ENCODE measurements at regions of chrX and their contacts with region 1.

Region 1: DNA sequence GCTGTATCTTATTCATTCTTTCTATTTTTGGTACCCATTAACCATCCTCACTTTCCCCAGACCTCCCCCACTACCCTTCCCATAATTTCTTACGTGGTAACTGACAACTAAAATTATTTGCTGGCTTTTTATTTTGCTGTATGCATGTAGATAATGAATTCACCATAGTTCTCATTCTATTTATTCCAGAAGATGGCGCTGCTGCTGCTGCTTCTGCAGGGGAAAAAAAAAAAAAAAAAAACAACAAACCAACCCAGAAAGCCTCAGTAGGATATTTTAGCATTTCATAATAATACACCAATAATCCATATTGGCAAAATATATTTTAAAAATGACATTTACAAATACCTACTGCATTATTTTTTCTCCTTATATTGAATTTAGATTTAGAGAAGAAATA is 416.6 kb upstream of the MAGEB18 start:
- DNase-seq: peak; percentile 1
- ATAC-seq: no peak
- H3K4me3 ChIP-seq: no peak overlapping the region
- H3K27ac ChIP-seq: no peak overlapping the region
- H3K4me1 ChIP-seq: no peaks in the 10 kb centered on the region
- H3K27me3 ChIP-seq: no peaks in the 10 kb centered on the region
- CTCF ChIP-seq: no peak
- EP300 ChIP-seq: no peak
- POLR2A ChIP-seq: no peak
- RAD21 ChIP-seq: no peak

Region 2: DNA sequence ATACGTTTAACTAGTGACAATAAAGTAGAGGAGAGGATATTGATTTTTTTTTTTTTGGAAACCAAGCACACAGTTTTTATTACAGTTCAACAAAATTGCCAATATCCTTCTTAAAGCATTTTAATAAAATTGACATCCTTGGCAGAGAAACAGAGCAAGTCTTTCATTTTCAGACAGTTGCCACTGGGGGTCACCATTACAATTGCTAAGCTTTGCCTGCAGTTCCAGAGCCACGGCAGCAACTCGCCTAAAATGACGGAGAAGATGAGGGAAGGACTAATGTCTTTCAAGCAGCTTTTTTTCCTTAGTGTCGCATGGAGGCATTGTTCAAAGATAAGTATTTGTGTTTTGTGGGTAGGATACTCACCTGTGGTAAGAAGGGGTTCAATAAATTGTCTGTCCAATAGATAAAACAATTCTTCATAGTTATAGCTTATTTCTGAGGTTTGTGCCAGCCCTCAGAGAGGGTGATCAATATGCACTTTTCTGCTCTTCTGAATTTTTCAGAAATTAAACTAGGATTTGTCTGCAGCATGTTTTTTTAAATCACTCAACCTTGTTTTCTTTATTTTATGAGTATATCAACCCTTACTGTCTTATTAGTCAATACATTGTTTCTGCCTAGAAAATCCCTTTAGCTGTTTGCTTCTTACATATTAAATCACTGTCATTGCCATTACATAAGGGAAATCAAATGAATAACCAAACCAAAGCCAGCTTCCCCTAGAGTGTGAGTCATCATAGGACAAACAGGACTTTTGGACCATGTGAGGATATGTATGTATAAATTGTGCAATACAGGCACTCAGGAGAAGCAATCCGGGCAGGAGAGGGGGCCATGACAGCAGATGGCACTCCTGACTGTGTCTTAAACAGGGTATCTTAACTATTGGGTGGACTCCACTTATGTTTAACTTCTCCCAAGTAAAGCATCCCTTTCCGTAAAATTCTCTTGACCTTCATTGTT is 197.7 kb before region 1 on chrX:
- CTCF ChIA-PET with region 1: no interaction called
- POLR2A ChIA-PET with region 1: no interaction called
- in situ Hi-C with region 1: no loop called
- intact Hi-C with region 1: loop called (anchors 5 kb)
- DNase-seq: peak; percentile 82
- ATAC-seq: peak; percentile 97
- H3K4me3 ChIP-seq: no peak overlapping the region
- H3K27ac ChIP-seq: no peak overlapping the region
- H3K4me1 ChIP-seq: peaks cover 21% of the 10 kb centered on the region
- H3K27me3 ChIP-seq: no peaks in the 10 kb centered on the region
- CTCF ChIP-seq: peak; percentile 59
- EP300 ChIP-seq: peak; percentile 18 to 64; a peak in 2 of 4 replicates
- POLR2A ChIP-seq: no peak
- RAD21 ChIP-seq: 0 out of 2 replicates have a peak, but pooled peaks have one; percentile 26

Region 3: DNA sequence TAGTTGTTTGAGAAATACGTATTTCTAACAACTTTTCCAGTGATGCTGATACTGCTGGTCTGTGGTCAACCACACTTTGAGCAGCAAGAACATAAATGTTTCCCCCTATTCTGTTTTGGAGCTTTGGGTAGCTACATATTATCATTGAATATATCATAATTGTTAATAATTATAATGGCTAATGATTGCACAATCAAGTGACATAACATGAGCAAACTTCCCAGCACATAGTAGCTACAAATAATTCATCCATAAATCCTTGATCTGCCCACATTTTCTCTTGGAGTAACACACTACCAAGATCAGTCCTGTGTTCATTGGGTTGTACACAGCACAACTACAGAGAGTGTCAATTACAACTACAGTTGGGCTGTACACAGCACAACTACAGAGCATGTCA is 19.7 kb before region 1 on chrX:
- CTCF ChIA-PET with region 1: no interaction called
- POLR2A ChIA-PET with region 1: no interaction called
- in situ Hi-C with region 1: no loop called
- intact Hi-C with region 1: no loop called
- DNase-seq: no peak
- ATAC-seq: no peak
- H3K4me3 ChIP-seq: no peak overlapping the region
- H3K27ac ChIP-seq: no peak overlapping the region
- H3K4me1 ChIP-seq: no peaks in the 10 kb centered on the region
- H3K27me3 ChIP-seq: no peaks in the 10 kb centered on the region
- CTCF ChIP-seq: no peak
- EP300 ChIP-seq: no peak
- POLR2A ChIP-seq: no peak
- RAD21 ChIP-seq: no peak

Region 4: GRCh38 chrX:25968920-25969319 is 247.4 kb after region 1 on chrX:
- CTCF ChIA-PET with region 1: no interaction called
- POLR2A ChIA-PET with region 1: no interaction called
- in situ Hi-C with region 1: no loop called
- intact Hi-C with region 1: loop called (anchors 5 kb)
- DNase-seq: peak; percentile 0
- ATAC-seq: no peak
- H3K4me3 ChIP-seq: no peak overlapping the region
- H3K27ac ChIP-seq: no peak overlapping the region
- H3K4me1 ChIP-seq: no peaks in the 10 kb centered on the region
- H3K27me3 ChIP-seq: no peaks in the 10 kb centered on the region
- CTCF ChIP-seq: peak; percentile 54
- EP300 ChIP-seq: no peak
- POLR2A ChIP-seq: no peak
- RAD21 ChIP-seq: no peak

Region 5: GRCh38 chrX:26032111-26032912 is 310.7 kb after region 1 on chrX:
- CTCF ChIA-PET with region 1: no interaction called
- POLR2A ChIA-PET with region 1: no interaction called
- in situ Hi-C with region 1: no loop called
- intact Hi-C with region 1: no loop called
- DNase-seq: no peak
- ATAC-seq: no peak
- H3K4me3 ChIP-seq: no peak overlapping the region
- H3K27ac ChIP-seq: no peak overlapping the region
- H3K4me1 ChIP-seq: no peaks in the 10 kb centered on the region
- H3K27me3 ChIP-seq: no peaks in the 10 kb centered on the region
- CTCF ChIP-seq: no peak
- EP300 ChIP-seq: no peak
- POLR2A ChIP-seq: no peak
- RAD21 ChIP-seq: no peak

Measured in HepG2 (cell line).